ENCODE measurements at regions of chr1 and their contacts with region 1.

Region 1: DNA sequence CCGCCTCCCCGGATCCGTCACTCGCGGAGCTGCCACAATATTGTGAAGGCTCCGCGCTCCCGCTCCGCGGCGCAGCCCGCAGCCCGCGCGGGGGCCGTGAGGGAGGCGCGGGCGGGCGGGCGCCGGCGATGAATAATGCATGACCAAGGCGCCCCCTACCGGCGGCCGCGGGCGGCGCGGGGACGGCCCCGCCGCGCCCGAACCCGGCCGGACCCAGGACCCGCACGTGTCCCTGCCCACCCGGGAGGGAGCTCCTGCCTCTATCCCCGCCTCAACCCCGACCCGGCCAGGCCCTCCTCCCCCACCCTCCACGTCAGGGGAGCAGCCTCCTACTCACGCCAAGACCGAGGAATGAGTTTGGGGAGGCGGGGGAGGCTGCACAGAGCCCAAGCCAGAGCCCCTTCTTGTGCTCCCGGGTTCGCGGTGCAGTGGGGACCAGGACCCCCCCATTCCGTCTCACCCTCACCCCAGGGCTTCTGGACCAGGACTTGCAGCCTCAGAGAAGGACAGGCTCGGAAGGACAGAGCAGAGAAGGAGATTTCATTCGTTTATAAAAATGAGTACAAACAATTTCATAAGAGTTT is 70.8 kb upstream of the CASZ1 start:
- DNase-seq: peak; percentile 34 to 93 (median 48)

Region 2: DNA sequence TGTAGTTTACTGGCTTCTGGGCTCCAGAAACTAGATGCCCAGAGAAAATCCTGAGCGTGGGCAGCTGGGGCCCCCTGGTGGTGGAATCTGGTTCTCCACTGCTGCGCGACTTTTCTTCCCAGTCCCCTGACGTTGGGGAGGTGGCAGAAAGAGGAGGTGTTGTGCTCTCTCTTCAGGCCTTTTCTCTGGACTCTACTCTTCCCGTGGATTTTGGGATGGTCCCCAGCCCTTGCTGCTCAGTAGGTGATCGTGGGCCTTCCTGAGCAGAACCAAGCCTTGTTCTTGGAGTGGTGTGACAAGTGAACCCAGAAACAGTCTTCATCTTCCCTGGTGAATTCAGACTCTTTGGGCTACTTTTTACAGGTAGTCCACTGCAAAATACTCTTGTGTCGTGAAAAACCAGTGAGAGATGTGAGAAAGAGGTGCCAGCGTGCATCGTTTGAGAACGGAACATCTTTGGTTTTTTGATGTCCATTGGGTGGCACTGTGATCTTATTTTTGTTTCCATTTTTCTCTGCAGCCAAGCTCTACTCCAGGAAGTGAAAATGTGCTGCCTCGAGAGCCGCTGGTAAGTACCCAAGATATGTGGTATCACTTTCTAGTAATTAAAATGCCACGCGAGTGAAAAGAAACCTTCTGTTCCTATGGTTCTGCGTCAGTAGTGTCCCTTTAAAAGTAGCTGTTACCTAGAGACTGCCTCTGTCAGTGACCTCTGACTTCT is 372.3 kb before region 1 on chr1:
- intact Hi-C with region 1: loop called (anchors 1 kb)
- DNase-seq: peak; percentile 61 to 97 (median 88)

Region 3: GRCh38 chr1:10507111-10507879 is 359.9 kb before region 1 on chr1:
- intact Hi-C with region 1: loop called (anchors 2 kb)
- DNase-seq: peak; percentile 37 to 94 (median 57)

Region 4: GRCh38 chr1:10514490-10515235 is 352.6 kb before region 1 on chr1:
- intact Hi-C with region 1: loop called (anchors 2 kb)
- DNase-seq: no peak

Region 5: GRCh38 chr1:10694633-10695627 is 172.3 kb before region 1 on chr1:
- intact Hi-C with region 1: loop called (anchors 5 kb)
- DNase-seq: peak; percentile 54 to 96 (median 78)

Region 6: DNA sequence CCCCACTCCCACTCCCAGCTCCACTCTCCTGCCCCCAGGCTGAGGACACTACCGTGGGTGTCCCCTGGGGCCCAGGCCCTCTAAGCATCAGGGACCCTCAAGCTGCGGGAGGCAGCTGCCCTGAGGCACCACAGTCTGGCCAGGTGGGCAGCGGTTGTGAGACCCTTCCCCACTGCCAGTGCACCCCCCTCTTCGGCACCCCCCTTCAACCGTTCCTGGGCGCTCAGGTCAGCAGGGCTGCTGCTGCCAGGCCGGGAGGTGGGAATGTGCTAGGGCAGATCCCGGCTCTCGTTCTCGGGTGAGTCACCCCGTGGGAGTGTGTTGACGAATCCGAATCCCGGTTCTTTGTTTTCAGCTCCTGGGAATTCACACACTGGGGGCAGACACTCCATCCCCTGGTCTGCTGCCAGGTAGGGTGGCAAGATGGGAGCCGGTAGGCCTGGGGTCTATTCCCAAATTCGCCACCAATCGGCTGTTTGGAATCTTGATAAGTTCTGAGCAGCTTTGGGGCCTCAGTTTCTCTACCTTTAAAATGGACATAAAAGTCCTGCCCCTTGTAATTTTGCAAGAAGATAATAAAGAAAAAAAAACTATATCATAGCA is 42.3 kb before region 1 on chr1:
- intact Hi-C with region 1: no loop called
- DNase-seq: peak in 1 of 10 donors; percentile 69

Region 7: GRCh38 chr1:10909697-10910671 is 42.8 kb after region 1 on chr1:
- intact Hi-C with region 1: no loop called
- DNase-seq: peak in 4 of 10 donors; percentile 44 to 83 (median 72)